ENCODE measurements at regions of chr12 and their contacts with region 1.

Region 1: DNA sequence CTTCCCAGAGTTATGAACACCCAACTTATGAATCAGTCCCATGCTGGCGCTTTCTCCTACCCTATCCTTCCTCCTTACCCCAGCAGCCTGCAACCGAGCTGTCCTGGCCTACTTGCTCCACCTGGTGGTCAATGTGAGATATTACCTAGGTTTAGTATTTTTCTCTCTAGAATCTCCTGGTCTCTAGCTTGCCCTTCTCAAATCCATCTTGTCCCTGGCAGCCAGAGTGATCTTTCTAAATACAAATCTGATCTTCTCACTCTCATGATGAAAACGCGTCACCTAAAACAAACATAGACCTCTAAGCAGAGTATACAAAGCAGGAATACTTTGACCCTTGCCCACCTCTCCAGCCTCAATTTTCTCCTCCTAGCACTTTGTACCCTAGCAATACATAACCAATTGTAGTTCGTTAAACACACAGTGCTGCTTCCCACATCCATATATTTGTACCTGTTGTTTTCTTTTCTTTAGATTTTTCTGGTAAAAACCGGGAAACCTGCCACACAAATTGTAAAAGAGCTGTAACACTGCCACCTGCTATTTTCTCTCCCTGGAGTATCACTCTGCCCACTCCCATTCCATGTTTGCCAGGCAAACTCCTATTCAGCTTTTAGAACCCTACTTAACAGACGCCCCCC is 20.0 kb upstream of the TCP11L2 start:
- DNase-seq: peak; percentile 75
- ATAC-seq: peak; percentile 82
- H3K4me3 ChIP-seq: no peak overlapping the region
- H3K4me3 Mint-ChIP-seq: no peak overlapping the region
- H3K27ac ChIP-seq: no peak overlapping the region
- H3K27ac Mint-ChIP-seq: peak overlapping the region; percentile 2
- H3K4me1 ChIP-seq: peaks cover 7 to 8% of the 10 kb centered on the region in 2 donors
- H3K4me1 Mint-ChIP-seq: peaks cover 37% of the 10 kb centered on the region
- H3K27me3 ChIP-seq: peaks cover 0 to 11% (median 0%) of the 10 kb centered on the region in 4 experiments
- H3K27me3 Mint-ChIP-seq: peaks cover 20% of the 10 kb centered on the region
- CTCF ChIP-seq: peak; percentile 88

Region 2: DNA sequence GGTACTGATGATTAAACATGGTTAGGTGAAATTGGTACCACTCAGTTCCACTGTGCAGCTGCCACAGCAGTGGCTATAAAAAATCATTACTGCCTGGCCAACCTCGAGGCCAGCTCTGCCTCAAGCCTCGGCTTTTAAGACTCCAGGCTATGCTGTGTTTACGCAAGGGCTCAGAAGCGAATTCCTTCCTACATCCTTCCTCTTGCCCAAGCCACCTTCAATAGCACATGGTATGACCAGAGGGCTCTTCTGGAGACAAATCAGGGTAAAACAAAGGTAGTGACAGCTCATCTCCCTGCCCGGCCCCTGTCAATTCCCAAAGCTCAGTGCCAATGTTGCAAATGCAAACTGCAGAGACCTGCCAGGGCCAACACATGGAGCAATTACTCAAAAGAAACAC is 175.7 kb before region 1 on chr12:
- CTCF ChIA-PET with region 1: no interaction called
- POLR2A ChIA-PET with region 1: no interaction called
- intact Hi-C with region 1: no loop called
- DNase-seq: no peak
- ATAC-seq: no peak
- H3K4me3 ChIP-seq: no peak overlapping the region
- H3K4me3 Mint-ChIP-seq: no peak overlapping the region
- H3K27ac ChIP-seq: no peak overlapping the region
- H3K27ac Mint-ChIP-seq: no peak overlapping the region
- H3K4me1 ChIP-seq: no peaks in the 10 kb centered on the region
- H3K4me1 Mint-ChIP-seq: no peaks in the 10 kb centered on the region
- H3K27me3 ChIP-seq: peaks cover 0 to 2% (median 0%) of the 10 kb centered on the region in 4 experiments
- H3K27me3 Mint-ChIP-seq: peaks cover 40% of the 10 kb centered on the region
- CTCF ChIP-seq: no peak

Region 3: DNA sequence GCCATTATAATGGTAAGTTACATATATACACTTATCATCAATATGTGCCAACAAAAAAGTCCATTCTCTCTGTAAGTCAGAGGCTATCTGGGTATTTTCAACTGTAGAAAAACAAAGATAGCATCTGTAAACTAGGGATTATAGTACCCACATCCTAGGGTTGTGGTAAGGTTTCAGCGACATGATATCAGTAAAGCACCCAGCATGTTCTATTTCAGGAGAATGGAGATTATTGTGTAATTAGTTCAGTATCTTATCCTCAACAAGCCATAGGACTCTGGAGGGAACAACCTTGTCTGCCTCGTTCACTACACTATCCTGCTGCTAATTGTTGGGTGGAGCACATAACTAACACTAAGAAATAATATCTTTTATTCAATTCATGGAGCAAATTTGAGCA is 15.0 kb before region 1 on chr12:
- CTCF ChIA-PET with region 1: interaction called, 13 read pairs
- POLR2A ChIA-PET with region 1: no interaction called
- intact Hi-C with region 1: no loop called
- DNase-seq: no peak
- ATAC-seq: no peak
- H3K4me3 ChIP-seq: no peak overlapping the region
- H3K4me3 Mint-ChIP-seq: no peak overlapping the region
- H3K27ac ChIP-seq: no peak overlapping the region
- H3K27ac Mint-ChIP-seq: no peak overlapping the region
- H3K4me1 ChIP-seq: no peaks in the 10 kb centered on the region
- H3K4me1 Mint-ChIP-seq: no peaks in the 10 kb centered on the region
- H3K27me3 ChIP-seq: peaks cover 0 to 15% (median 4%) of the 10 kb centered on the region in 4 experiments
- H3K27me3 Mint-ChIP-seq: peaks cover under 1% of the 10 kb centered on the region
- CTCF ChIP-seq: no peak

Region 4: GRCh38 chr12:106296193-106296877 is 13.8 kb after region 1 on chr12:
- CTCF ChIA-PET with region 1: interaction called, 158 read pairs
- POLR2A ChIA-PET with region 1: interaction called, 23 read pairs
- intact Hi-C with region 1: loop called (anchors 1 kb)
- DNase-seq: no peak
- ATAC-seq: no peak
- H3K4me3 ChIP-seq: no peak overlapping the region
- H3K4me3 Mint-ChIP-seq: no peak overlapping the region
- H3K27ac ChIP-seq: no peak overlapping the region
- H3K27ac Mint-ChIP-seq: no peak overlapping the region
- H3K4me1 ChIP-seq: peaks cover 14 to 17% of the 10 kb centered on the region in 2 donors
- H3K4me1 Mint-ChIP-seq: peaks cover 33% of the 10 kb centered on the region
- H3K27me3 ChIP-seq: no peaks in the 10 kb centered on the region
- H3K27me3 Mint-ChIP-seq: no peaks in the 10 kb centered on the region
- CTCF ChIP-seq: no peak

Measured in B cell (primary cell).